ENCODE measurements at regions of chr18 and their contacts with region 1.

Region 1: DNA sequence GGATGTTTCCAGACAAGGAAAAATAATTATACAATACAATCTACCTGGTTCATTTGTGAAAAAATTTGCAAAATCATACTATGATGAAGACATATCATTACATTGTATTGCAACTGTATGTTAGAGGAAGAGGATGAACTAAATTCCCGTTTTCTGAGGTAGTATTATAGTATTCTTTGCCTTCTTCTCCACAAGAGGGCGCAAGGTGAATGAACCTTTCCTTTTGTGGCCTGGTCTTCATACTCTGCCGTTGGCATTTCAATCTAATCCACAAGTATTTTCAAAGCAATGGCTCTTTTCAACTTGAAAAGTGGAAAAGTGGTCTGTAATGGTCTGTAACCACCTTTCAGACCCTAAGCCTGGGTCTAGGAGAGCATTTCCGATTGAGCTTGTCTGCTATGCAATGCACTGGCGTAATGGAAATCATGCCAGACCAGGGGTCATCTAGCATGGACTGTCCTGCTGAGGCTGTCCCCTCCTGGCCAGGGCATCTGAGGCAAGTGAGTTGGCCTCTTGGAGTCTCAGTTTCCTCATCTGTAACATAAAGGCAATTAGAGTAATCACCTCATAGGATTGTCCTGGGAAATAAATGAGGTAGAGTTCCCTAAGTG is 30.8 kb upstream of the ZNF396 start:
- DNase-seq: peak; percentile 68 to 74
- H3K4me3 ChIP-seq: no peak overlapping the region
- H3K4me1 ChIP-seq: no peaks in the 10 kb centered on the region; the same call in 1 of the 2 replicates
- H3K27me3 ChIP-seq: no peaks in the 10 kb centered on the region

Region 2: DNA sequence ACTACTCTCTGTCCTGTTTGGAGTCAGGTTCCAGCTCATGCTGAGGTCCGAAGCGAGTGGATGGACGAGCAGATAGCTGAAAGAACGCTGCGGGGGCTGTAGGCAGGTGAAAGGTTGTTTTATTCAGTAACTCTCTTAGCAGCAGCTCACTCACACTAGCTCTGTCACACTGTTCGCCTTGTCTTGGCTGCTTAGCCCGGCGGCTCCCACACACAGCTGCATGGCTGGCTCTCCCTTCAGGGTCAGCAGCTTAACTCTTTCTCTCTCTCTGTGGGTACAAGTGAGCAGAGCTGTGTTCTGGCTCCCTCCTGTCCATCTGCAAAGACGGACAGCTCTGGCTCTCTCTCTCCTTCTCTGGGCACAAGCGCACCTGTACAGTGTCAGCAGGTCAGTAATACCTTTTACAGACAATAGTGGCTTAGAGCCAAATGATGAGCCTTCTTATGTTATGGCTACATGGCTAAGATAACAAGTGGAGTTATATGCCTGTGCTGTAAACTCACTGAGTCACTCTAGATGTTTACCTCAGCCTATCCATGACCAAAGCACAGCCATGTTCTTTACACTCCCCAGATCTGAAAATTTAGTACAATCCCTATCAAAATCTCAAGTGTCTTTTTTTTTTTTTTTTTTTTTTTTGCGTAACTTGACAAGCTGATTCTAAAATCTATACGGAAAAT is 322.9 kb after region 1 on chr18:
- in situ Hi-C with region 1: loop called (anchors 25 kb)
- DNase-seq: no peak
- H3K4me3 ChIP-seq: no peak overlapping the region
- H3K4me1 ChIP-seq: no peaks in the 10 kb centered on the region
- H3K27me3 ChIP-seq: 0 out of 2 replicates have a peak, but pooled peaks cover 7% of the 10 kb centered on the region

Measured in HAP-1 (cell line).